Head of caudate nucleus (tissue), 42 donors: ENCODE measurements at regions of chr12 and their contacts with region 1.

Region 1: DNA sequence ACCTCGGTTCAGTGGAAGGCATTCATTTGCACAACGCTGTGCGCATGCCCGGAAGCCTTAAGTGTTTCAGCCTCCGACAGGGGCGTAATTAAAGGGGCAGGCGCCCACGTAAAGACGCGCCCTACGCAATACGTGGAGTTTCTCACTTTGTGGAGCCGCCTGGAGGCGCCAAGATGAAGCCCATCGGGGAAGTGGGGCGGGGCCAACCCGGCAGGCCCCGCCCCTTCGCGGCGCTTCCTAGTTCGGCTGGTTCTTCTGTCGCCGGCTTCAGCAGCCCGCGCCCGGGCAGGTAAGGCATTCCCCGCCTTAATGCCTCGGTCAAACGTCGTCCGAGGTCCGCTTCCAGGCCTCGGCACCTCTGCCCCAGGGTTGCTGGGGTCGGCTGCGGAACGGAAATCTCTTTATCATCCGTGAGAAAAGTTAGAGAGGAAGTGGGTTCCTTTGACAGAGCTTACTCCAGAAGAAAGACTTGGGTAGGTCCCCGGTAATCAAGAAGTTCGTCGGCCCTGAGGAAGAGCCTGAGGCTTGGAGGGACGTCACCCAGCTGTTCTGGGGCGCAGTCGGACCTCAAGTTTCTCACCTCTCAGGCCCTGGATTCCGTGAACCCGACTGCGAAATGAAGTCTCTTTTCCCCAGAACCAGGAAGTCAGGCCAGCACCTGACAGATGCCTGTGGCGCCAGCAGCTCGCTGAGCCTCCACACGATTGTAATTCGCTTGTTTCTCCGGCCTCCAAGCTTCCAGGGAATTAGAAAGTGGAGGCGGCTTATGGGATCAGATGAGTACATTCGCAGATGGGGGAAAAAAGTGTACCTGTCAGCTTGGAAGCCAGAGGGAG is at the starts of genes IRAK4 and PUS7L:
- DNase-seq: peak; percentile 89 to 98 (median 95)

Region 2: DNA sequence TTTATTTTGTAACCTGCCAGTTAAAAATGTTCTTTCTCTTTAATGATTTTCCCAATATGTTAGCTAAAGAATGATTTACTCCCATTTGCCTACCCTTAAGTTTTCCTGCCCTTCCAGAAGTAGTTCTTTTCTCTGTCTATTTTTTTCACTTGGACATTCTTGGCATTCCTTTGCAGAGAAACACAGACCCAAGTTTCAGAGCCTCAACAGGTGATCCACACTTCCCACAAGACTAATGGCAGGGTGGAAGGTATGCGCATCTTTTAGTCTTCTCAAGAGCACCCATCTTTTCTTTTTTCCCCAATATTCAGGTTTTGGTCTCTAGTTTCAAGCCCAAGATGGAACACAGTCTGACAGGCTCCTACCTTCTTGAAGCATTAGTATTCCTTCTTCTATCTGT is 627.6 kb before region 1 on chr12:
- intact Hi-C with region 1: no loop called
- DNase-seq: no peak

Region 3: DNA sequence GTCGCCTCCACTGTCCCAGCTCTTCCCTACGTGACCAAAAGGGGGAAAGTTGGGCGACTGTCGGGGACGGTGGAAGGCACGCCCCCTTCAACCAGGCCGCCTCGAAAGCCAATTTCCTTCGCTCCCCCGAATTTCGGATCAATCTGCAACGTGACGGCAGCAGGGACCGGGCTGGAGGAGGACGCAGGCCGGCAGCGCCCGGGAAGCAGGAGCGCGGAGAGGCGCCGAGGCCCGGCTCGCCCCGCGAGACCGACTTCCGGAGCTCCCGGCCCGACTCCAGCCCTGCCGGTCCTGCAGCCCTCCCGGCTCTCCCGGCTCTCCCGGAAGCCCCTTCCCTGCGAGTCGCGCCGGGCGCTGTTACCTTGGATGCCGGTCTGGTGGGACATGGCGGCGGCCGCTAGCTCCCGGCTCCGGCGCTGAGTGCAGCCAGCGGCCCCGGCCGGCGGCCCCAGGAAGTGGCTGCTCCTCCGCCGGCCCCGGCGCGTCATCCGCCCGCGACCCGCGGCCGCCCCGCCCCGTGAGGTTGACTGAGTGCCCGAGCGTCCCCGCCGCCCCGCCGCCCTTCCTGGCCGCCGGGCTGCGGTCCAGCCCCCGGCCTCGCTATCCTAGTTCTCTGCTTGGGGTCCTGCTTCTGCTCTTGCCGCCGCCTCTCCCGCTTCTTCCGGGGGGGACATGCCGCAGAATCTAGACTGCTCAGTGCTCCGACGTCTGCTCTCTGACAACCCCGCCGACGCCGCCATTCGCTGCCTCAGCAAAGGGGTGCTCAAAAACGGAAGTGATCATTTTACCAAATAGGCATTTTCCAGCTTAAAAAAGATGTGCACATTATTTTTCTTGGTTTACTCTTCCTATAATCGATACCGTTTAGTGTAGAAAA is 47.2 kb after region 1 on chr12 and contains the start of gene TWF1:
- intact Hi-C with region 1: loop called (anchors 5 kb)
- DNase-seq: peak; percentile 66 to 94 (median 89)

Region 4: GRCh38 chr12:44157359-44157758 is 398.4 kb after region 1 on chr12:
- intact Hi-C with region 1: no loop called
- DNase-seq: no peak